Dendritic cell treated with granulocyte-macrophage colony-stimulating factor and Interleukin-4, amounts not matched to agents 40 ng/mL and 50 ng/mL, for 4 days (primary cell): ENCODE measurements at regions of chr20 and their contacts with region 1.

Region 1: DNA sequence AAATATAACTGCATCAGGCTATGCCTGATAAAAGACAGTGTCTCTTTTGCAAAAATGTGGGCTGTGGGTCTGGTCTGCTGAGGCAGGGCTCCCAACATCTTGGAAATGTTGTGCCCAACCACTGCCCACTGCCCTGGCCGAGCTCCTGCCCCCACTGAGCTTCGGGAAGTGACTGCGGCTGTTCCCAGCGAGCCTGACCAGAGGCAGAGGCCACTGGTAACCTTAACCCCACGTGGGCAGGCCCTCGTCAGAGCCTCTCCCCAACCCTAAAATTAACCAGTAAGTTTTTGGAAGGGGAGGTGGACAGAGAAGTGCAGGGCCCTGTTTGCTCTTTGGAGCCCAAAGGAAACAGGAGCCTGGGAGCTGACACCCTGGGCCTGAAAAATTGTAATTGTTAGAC is 225.9 kb downstream of the MAFB start:
- H3K4me3 Mint-ChIP-seq: no peak overlapping the region
- H3K27ac Mint-ChIP-seq: peak overlapping the region; percentile 87
- H3K4me1 Mint-ChIP-seq: peaks cover 82% of the 10 kb centered on the region
- H3K27me3 Mint-ChIP-seq: peaks cover 2% of the 10 kb centered on the region

Region 2: GRCh38 chr20:40160097-40160550 is 303.0 kb before region 1 on chr20:
- intact Hi-C with region 1: loop called (anchors 10 kb)
- H3K4me3 Mint-ChIP-seq: no peak overlapping the region
- H3K27ac Mint-ChIP-seq: no peak overlapping the region
- H3K4me1 Mint-ChIP-seq: peaks cover 32% of the 10 kb centered on the region
- H3K27me3 Mint-ChIP-seq: peaks cover 14% of the 10 kb centered on the region

Region 3: GRCh38 chr20:40339661-40340449 is 123.3 kb before region 1 on chr20:
- intact Hi-C with region 1: loop called (anchors 5 kb)
- H3K4me3 Mint-ChIP-seq: no peak overlapping the region
- H3K27ac Mint-ChIP-seq: peak overlapping the region; percentile 91
- H3K4me1 Mint-ChIP-seq: peaks cover 59% of the 10 kb centered on the region
- H3K27me3 Mint-ChIP-seq: no peaks in the 10 kb centered on the region

Region 4: DNA sequence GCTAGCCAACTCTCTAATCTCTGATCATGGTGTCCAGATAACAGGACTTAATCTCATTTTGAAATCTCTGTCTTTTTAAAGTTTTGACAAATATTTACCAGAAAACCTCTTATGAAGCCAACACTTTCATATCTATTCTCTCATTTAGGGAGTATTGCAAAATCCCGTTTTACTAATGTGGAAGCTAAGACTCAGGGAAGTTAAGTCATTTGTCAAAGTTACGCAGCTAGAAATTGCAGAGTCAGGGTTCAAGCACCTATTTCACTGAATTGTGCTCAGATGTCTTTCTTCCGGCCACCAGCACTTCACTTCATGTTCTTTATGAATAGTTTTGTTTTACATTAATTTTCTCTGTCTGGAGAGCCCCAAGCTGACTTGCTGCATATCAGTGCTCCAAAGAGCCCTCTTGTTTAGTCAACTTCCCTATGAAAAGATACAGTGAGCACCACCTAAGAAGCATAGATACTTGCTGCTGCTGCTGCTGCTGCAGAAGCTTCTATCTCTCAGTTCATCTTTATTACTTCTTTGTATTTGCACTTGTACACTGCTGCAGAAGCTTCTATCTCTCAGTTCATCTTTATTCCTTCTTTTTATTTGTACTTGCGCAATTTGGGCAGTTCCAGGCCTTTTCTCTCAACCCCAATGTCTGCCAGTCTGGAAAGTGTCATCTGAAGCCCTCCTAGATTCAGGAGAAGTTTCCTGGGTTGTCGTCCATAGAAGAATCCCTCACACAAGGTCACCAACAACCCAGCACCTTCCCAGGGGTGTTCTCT is 103.9 kb before region 1 on chr20:
- intact Hi-C with region 1: loop called (anchors 2 kb)
- H3K4me3 Mint-ChIP-seq: peak overlapping the region; percentile 35
- H3K27ac Mint-ChIP-seq: peak overlapping the region; percentile 83
- H3K4me1 Mint-ChIP-seq: peaks cover 89% of the 10 kb centered on the region
- H3K27me3 Mint-ChIP-seq: peaks cover 6% of the 10 kb centered on the region

Region 5: GRCh38 chr20:40497899-40498691 is 34.9 kb after region 1 on chr20:
- intact Hi-C with region 1: loop called (anchors 5 kb)
- H3K4me3 Mint-ChIP-seq: peak overlapping the region; percentile 21
- H3K27ac Mint-ChIP-seq: peak overlapping the region; percentile 91
- H3K4me1 Mint-ChIP-seq: peaks cover 78% of the 10 kb centered on the region
- H3K27me3 Mint-ChIP-seq: no peaks in the 10 kb centered on the region

Region 6: GRCh38 chr20:40511478-40511877 is 48.3 kb after region 1 on chr20:
- intact Hi-C with region 1: no loop called
- H3K4me3 Mint-ChIP-seq: no peak overlapping the region
- H3K27ac Mint-ChIP-seq: peak overlapping the region; percentile 45
- H3K4me1 Mint-ChIP-seq: peaks cover 73% of the 10 kb centered on the region
- H3K27me3 Mint-ChIP-seq: no peaks in the 10 kb centered on the region

Region 7: GRCh38 chr20:40525351-40525750 is 62.2 kb after region 1 on chr20:
- intact Hi-C with region 1: no loop called
- H3K4me3 Mint-ChIP-seq: no peak overlapping the region
- H3K27ac Mint-ChIP-seq: no peak overlapping the region
- H3K4me1 Mint-ChIP-seq: peaks cover 13% of the 10 kb centered on the region
- H3K27me3 Mint-ChIP-seq: peaks cover 6% of the 10 kb centered on the region

Region 8: GRCh38 chr20:40646361-40646760 is 183.2 kb after region 1 on chr20:
- intact Hi-C with region 1: no loop called
- H3K4me3 Mint-ChIP-seq: no peak overlapping the region
- H3K27ac Mint-ChIP-seq: no peak overlapping the region
- H3K4me1 Mint-ChIP-seq: peaks cover 17% of the 10 kb centered on the region
- H3K27me3 Mint-ChIP-seq: peaks cover 43% of the 10 kb centered on the region

Region 9: DNA sequence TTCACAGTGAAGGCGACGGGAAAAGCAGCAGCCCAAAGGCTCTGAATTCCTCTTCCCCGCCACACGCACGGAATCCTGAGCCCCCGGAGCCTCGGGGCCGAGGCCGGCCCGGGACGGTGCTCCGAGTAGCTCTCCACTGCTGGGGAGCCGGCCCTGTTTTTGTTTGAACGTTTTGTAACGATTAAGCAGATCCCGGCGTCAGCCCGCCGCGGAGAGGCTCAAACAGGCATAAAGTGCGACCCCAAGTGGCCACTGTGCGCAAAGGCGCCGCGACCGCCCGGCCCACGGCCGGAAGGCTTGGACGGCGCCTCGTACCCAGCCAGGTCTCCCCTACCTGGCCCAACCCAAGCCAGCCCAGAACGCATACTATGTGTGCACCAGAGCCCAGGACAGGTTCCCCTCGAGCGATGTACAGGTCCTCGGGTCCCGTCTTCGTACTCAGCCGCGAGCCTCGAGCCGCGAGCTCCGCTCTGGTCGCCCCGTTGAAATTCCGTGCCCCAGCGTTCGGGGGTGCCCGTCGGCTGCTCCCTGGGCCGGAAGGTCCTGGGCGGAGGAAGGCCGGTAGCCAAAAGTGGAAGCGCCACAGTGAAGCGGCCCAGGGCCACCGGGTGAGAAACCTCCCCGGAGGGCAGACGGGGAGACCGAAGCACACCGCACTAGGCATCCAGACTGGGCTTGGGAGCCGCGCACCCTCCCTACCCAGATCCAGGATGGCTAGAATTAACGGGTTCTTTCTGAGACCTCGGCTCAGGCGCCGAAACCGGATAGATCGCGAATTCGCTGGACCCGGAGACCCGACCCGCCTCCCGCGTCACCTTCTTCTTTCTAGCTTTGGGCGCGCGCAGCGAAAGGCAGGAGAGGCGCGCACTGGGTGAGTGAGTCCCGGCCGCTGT is 227.0 kb after region 1 on chr20:
- intact Hi-C with region 1: loop called (anchors 5 kb)
- H3K4me3 Mint-ChIP-seq: peak overlapping the region; percentile 100
- H3K27ac Mint-ChIP-seq: peak overlapping the region; percentile 97
- H3K4me1 Mint-ChIP-seq: peaks cover 48% of the 10 kb centered on the region
- H3K27me3 Mint-ChIP-seq: peaks cover 52% of the 10 kb centered on the region

Region 10: GRCh38 chr20:41308290-41308711 is 845.1 kb after region 1 on chr20:
- intact Hi-C with region 1: no loop called
- H3K4me3 Mint-ChIP-seq: no peak overlapping the region
- H3K27ac Mint-ChIP-seq: no peak overlapping the region
- H3K4me1 Mint-ChIP-seq: peaks cover 19% of the 10 kb centered on the region
- H3K27me3 Mint-ChIP-seq: no peaks in the 10 kb centered on the region